Endothelial cell of umbilical vein (primary cell): ENCODE measurements at regions of chr14 and their contacts with region 1.

Region 1: DNA sequence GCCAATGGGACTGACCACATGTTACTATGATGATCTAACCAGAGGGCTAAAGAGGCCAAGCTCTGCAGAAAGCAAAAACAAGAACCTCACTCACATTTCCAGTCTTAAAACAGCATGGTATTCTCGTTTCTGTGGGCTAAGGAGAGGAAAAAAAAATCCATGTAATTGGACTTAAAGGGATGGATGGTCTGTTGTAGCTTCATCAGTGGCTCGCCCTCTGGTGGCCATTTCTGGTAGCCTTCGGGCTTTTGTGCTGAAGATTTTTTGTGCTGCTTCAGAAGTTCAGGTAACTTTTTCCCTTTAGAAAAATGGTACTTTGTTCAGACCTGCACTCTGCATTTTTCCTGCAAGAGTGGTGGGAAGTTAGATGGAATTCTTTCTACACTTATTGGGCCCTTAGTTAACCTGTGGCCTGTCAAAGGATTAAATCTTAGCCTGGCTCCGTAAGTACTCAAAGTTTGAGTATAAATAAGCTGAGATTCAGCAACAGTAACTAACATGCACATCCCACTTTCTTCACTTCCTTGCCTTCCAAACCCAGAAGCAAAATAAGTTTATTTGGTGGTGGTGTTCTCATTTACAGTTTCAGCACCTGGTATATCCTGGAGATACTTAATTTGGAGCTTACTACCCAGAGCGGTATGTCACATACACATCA is 22.3 kb downstream of the DCAF4 start:
- DNase-seq: peak; percentile 73
- H3K4me3 ChIP-seq: no peak overlapping the region
- H3K27ac ChIP-seq: no peak overlapping the region
- H3K4me1 ChIP-seq: no peaks in the 10 kb centered on the region
- H3K27me3 ChIP-seq: no peaks in the 10 kb centered on the region
- CTCF ChIP-seq: peak; percentile 87
- POLR2A ChIP-seq: no peak

Region 2: DNA sequence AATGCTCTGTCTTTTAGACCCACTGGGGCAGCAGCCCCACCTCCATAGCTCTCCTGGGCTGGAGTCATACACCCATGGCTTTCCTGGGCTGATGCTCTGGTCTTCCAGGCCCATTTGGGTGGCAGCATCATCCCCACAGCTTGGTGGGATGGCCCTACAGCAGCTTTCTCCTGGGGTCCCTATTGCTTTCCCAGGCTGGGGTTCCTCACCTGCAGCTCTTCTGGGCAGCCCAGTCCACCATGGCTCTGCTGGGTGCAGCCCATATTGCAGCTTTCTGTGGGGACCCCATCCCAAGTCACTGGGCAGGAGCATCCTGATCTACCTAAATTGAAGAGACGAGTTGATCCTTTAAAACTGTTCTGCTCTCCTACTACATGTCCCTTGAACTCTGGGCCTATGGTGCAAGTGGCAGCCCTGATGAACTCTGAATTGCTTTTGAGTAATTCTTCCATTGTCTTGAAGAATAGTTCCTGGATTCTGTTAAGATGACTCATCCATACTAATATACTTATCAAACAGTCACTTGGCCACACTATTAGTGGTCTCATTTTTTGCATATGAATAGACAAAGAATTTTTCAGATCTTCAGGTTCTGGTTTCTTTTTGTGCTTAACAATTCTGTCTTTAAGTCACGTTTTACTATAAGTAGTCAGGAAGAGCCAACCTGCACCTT is 444.8 kb before region 1 on chr14:
- CTCF ChIA-PET with region 1: interaction called, 751 read pairs
- POLR2A ChIA-PET with region 1: no interaction called
- dilution Hi-C with region 1: no loop called
- intact Hi-C with region 1: no loop called
- DNase-seq: peak; percentile 26
- H3K4me3 ChIP-seq: no peak overlapping the region
- H3K27ac ChIP-seq: no peak overlapping the region
- H3K4me1 ChIP-seq: peaks cover 8% of the 10 kb centered on the region
- H3K27me3 ChIP-seq: peaks cover 2 to 6% of the 10 kb centered on the region in 2 experiments
- CTCF ChIP-seq: no peak
- POLR2A ChIP-seq: no peak

Region 3: GRCh38 chr14:72904840-72905561 is 43.6 kb before region 1 on chr14:
- CTCF ChIA-PET with region 1: interaction called, 39 read pairs
- POLR2A ChIA-PET with region 1: no interaction called
- dilution Hi-C with region 1: no loop called
- intact Hi-C with region 1: loop called (anchors 1 kb)
- DNase-seq: peak; percentile 68
- H3K4me3 ChIP-seq: no peak overlapping the region
- H3K27ac ChIP-seq: no peak overlapping the region
- H3K4me1 ChIP-seq: no peaks in the 10 kb centered on the region
- H3K27me3 ChIP-seq: no peaks in the 10 kb centered on the region
- CTCF ChIP-seq: peak; percentile 78 to 93
- POLR2A ChIP-seq: no peak

Region 4: DNA sequence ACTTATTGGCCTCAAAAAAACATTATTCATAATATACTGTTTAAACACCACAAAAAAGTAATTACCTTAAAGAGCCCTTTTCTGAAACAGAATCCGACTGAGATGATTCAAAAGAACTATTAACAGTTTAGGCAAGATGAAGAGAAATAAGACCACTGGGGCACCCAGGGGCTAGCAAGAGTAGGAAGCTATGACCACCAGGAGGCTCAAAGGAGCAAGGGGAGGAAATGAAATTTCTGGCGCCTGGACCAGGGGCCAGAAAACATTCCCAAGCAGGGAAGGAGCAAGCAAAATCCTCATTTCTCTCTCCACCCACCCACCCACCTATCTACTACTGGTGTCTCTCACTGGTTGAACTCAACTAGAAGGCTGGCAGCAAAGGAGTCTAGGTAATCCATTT is 28.6 kb before region 1 on chr14:
- CTCF ChIA-PET with region 1: interaction called, 10 read pairs
- POLR2A ChIA-PET with region 1: no interaction called
- dilution Hi-C with region 1: no loop called
- intact Hi-C with region 1: no loop called
- DNase-seq: no peak
- H3K4me3 ChIP-seq: no peak overlapping the region
- H3K27ac ChIP-seq: no peak overlapping the region
- H3K4me1 ChIP-seq: no peaks in the 10 kb centered on the region
- H3K27me3 ChIP-seq: peaks cover 30 to 39% of the 10 kb centered on the region in 2 experiments
- CTCF ChIP-seq: peak in 1 of 2 donors; percentile 12
- POLR2A ChIP-seq: no peak

Region 5: DNA sequence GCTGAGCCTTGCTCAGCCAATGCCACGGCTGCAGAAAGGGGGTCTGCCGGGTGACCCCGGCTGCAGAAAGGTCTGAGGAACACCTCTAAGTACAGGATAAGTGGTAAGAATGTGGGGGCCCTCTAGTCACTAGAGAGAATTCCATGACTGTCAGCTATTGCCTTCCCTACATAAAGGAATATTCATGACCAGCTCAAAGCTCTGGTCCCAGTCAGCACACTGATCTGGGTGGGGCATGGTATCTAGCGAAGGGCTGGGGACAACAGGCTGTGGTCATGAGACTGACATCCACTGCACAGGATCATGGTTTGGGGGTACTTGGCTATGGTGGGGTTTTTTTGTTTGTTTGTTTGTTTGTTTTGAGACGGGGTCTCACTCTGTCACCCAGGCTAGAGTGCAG is 19.7 kb after region 1 on chr14:
- CTCF ChIA-PET with region 1: interaction called, 10 read pairs
- POLR2A ChIA-PET with region 1: no interaction called
- dilution Hi-C with region 1: no loop called
- intact Hi-C with region 1: no loop called
- DNase-seq: no peak
- H3K4me3 ChIP-seq: no peak overlapping the region
- H3K27ac ChIP-seq: no peak overlapping the region
- H3K4me1 ChIP-seq: no peaks in the 10 kb centered on the region
- H3K27me3 ChIP-seq: no peaks in the 10 kb centered on the region
- CTCF ChIP-seq: no peak
- POLR2A ChIP-seq: no peak